CD4-positive, alpha-beta T cell (primary cell): ENCODE measurements at regions of chr1 and their contacts with region 1.

Region 1: DNA sequence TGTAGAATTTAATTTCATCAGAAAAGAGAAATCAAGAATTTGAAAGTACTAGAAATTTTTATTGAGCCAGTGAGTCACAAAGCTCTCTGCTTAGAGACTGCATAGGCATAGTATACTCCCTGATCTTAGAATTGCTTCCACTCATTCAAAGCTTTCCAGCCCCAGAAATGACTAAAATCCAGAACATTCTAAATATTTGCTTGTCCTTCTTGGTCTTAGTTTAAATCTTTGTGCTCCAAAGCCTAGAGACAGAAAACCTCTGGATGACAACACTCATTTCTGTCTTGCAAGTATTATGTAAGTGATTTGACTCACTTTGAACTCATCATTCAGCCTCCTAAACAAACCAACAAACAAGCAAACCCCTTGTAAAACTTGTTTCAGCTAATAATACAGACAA is 74.2 kb downstream of the PTPRC start:
- DNase-seq: no peak
- ATAC-seq: no peak
- H3K4me3 ChIP-seq: no peak overlapping the region
- H3K4me3 Mint-ChIP-seq: peak overlapping the region; percentile 34
- H3K27ac ChIP-seq: no peak overlapping the region
- H3K27ac Mint-ChIP-seq: peak overlapping the region; percentile 51
- H3K4me1 ChIP-seq: peaks cover 4% of the 10 kb centered on the region
- H3K4me1 Mint-ChIP-seq: peaks cover 78% of the 10 kb centered on the region
- H3K27me3 ChIP-seq: no peaks in the 10 kb centered on the region
- H3K27me3 Mint-ChIP-seq: no peaks in the 10 kb centered on the region
- CTCF ChIP-seq: no peak

Region 2: DNA sequence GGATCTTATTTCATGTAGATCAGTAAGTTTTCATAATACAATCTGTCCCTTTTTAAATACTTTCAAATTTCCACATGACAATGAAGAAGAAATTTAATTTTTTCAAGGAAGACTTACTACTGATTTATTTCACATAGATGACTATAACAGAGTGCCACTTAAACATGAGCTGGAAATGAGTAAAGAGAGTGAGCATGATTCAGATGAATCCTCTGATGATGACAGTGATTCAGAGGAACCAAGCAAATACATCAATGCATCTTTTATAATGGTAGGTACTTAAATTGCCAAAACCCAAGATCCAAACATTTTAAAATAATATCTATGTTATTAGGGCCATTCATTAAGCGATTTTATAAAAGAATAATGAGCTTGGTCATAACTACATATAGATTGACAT is 36.2 kb after region 1 on chr1:
- CTCF ChIA-PET with region 1: interaction called, 3 read pairs
- POLR2A ChIA-PET with region 1: interaction called, 3 read pairs
- intact Hi-C with region 1: loop called (anchors 5 kb)
- DNase-seq: no peak
- ATAC-seq: no peak
- H3K4me3 ChIP-seq: no peak overlapping the region
- H3K4me3 Mint-ChIP-seq: no peak overlapping the region
- H3K27ac ChIP-seq: no peak overlapping the region
- H3K27ac Mint-ChIP-seq: peak overlapping the region; percentile 50
- H3K4me1 ChIP-seq: peaks cover 2% of the 10 kb centered on the region
- H3K4me1 Mint-ChIP-seq: peaks cover 18% of the 10 kb centered on the region
- H3K27me3 ChIP-seq: no peaks in the 10 kb centered on the region
- H3K27me3 Mint-ChIP-seq: no peaks in the 10 kb centered on the region
- CTCF ChIP-seq: no peak